Activated CD4-positive, alpha-beta T cell treated with anti-CD3 and anti-CD28 coated beads for 36 hours (primary cell): ENCODE measurements at regions of chr1 and their contacts with region 1.

Region 1: GRCh38 chr1:59947047-59947938 is 20.7 kb upstream of the CYP2J2 start:
- DNase-seq: peak; percentile 70
- ATAC-seq: peak; percentile 93
- H3K4me3 Mint-ChIP-seq: no peak overlapping the region
- H3K27ac Mint-ChIP-seq: no peak overlapping the region
- H3K4me1 Mint-ChIP-seq: no peaks in the 10 kb centered on the region
- H3K27me3 Mint-ChIP-seq: peaks cover 6% of the 10 kb centered on the region

Region 2: DNA sequence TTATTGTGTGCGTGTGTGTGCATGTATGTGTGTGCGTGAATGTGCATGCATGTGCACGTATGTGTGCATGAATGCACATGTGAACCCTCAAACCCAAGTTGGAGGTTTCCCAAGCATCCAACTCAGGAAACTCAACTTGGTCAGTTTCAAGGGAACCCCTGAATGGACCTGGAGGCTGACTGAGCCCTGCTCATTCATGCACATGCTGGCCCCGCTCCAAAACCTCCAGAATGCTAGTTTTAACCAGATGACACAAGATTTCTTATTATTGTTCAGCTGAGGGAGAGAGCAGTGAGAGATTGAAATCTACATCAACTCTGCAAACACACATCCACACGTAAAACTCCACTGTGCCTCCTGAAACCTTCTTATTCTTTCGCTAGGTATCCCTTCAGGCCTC is 1505.2 kb before region 1 on chr1:
- CTCF ChIA-PET with region 1: no interaction called
- POLR2A ChIA-PET with region 1: no interaction called
- intact Hi-C with region 1: no loop called
- DNase-seq: no peak
- ATAC-seq: no peak
- H3K4me3 Mint-ChIP-seq: no peak overlapping the region
- H3K27ac Mint-ChIP-seq: no peak overlapping the region
- H3K4me1 Mint-ChIP-seq: no peaks in the 10 kb centered on the region
- H3K27me3 Mint-ChIP-seq: no peaks in the 10 kb centered on the region

Region 3: DNA sequence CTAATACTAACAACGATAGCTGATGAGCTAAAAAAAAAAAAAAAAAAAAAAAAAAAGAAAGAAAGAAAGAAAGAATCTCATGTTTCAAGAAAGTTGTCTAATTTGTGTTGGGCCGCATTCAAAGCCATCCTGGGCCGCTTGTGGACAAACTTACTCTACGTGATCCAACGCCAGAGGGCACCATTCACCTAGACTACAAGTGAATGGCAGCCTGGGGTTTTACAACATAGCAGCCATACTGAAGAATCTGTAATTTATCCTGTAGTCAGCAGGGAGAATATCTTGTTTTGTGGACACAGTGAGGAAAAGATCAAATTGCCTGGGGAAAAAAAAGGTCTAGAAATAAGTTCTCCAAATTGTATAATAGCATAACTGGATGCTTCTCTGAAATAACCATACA is 67.7 kb before region 1 on chr1:
- CTCF ChIA-PET with region 1: interaction called, 119 read pairs
- POLR2A ChIA-PET with region 1: no interaction called
- intact Hi-C with region 1: loop called (anchors 1 kb)
- DNase-seq: peak; percentile 77
- ATAC-seq: peak; percentile 71
- H3K4me3 Mint-ChIP-seq: no peak overlapping the region
- H3K27ac Mint-ChIP-seq: no peak overlapping the region
- H3K4me1 Mint-ChIP-seq: no peaks in the 10 kb centered on the region
- H3K27me3 Mint-ChIP-seq: no peaks in the 10 kb centered on the region

Region 4: GRCh38 chr1:59892841-59893811 is 54.2 kb before region 1 on chr1:
- CTCF ChIA-PET with region 1: interaction called, 13 read pairs
- POLR2A ChIA-PET with region 1: no interaction called
- intact Hi-C with region 1: no loop called
- DNase-seq: no peak
- ATAC-seq: peak; percentile 44
- H3K4me3 Mint-ChIP-seq: no peak overlapping the region
- H3K27ac Mint-ChIP-seq: no peak overlapping the region
- H3K4me1 Mint-ChIP-seq: peaks cover 17% of the 10 kb centered on the region
- H3K27me3 Mint-ChIP-seq: no peaks in the 10 kb centered on the region

Region 5: GRCh38 chr1:59903141-59903754 is 44.0 kb before region 1 on chr1:
- CTCF ChIA-PET with region 1: interaction called, 34 read pairs
- POLR2A ChIA-PET with region 1: no interaction called
- intact Hi-C with region 1: loop called (anchors 1 kb)
- DNase-seq: peak; percentile 33
- ATAC-seq: peak; percentile 58
- H3K4me3 Mint-ChIP-seq: no peak overlapping the region
- H3K27ac Mint-ChIP-seq: no peak overlapping the region
- H3K4me1 Mint-ChIP-seq: no peaks in the 10 kb centered on the region
- H3K27me3 Mint-ChIP-seq: peaks cover 2% of the 10 kb centered on the region

Region 6: DNA sequence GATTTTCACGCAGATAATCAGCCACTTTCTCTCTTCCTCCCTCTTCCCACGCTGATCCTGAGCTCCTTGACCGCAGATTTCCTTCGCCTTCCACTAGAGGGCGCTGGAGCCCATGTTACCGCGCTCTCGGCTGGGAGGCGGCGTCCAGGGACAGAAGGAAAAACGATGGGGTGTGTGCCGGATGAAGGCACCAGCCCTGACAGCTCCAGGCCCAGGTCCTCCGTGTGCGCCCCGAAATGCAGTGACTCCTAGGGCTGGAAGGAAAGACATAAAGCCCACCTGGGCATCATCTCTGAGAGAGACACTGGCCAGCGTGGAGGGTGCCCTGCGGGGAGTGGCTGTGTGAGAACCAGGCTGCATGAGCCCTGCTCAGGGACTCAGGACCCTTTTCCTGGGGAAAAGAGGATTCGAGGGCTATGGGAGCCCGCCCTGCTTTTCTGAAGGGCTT is 24.2 kb after region 1 on chr1:
- CTCF ChIA-PET with region 1: interaction called, 15 read pairs
- POLR2A ChIA-PET with region 1: no interaction called
- intact Hi-C with region 1: no loop called
- DNase-seq: peak; percentile 74
- ATAC-seq: peak; percentile 47
- H3K4me3 Mint-ChIP-seq: no peak overlapping the region
- H3K27ac Mint-ChIP-seq: no peak overlapping the region
- H3K4me1 Mint-ChIP-seq: peaks cover 5% of the 10 kb centered on the region
- H3K27me3 Mint-ChIP-seq: peaks cover 21% of the 10 kb centered on the region